CD14-positive monocyte (primary cell): ENCODE measurements at regions of chr16 and their contacts with region 1.

Region 1: DNA sequence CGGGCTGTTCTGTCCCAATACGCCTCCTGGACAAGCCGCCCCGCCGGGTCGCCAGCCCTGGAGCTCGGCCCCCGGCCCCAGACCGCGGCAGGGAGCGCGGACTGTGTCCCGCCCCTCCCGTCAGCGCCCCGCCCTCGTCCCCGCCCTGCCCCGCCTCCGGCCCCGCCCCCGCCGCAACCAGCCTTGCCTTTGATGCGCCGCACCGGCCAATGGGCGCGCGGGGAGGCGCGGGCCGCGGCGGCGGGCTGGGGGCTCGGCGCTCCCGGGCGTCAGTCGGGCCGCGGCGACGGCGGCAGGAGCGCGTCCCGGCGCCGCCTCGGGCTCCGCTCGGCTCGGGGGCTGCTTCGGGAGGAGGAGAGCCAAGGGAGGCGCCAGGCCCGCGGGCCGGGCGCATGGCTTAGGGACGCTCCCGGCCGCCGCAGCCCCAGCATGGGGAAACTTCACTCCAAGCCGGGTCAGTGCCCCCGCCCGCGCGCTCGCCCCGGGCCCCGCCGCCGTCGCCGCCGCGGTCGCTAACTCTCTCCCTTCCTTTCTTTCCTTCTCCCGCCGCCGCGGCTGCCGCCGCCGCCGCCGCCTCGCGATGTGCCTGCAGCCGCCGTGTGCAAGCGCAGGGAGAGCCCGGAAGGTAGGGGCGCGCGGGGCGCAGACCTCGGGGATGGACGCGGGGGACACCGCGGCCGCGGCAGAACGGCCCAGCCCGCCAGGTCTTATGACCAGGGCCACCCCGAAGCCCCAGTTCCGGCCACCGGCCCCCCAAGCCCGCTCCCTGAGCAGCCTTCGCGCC is at the start of gene NKD1:
- DNase-seq: peak; percentile 35 to 58 (median 55)
- H3K4me3 ChIP-seq: peak within 1 kb of the TSS; percentile 60 to 80 (median 60)
- H3K4me3 Mint-ChIP-seq: peak within 1 kb of the TSS; percentile 83 to 91
- H3K27ac ChIP-seq: no peak within 1 kb of the TSS
- H3K27ac Mint-ChIP-seq: peak within 1 kb of the TSS in 2 of 7 donors; percentile 53 to 70
- H3K4me1 ChIP-seq: peaks cover 13 to 14% of the 10 kb centered on the region in 2 donors
- H3K4me1 Mint-ChIP-seq: peaks cover 4% of the 10 kb centered on the region
- H3K27me3 ChIP-seq: peaks cover 30 to 64% of the 10 kb centered on the region in 2 donors
- H3K27me3 Mint-ChIP-seq: peaks cover 57 to 72% (median 57%) of the 10 kb centered on the region in 3 donors
- CTCF ChIP-seq: no peak
- polyA plus RNA-seq, gene NKD1: 0.01 TPM in 1 of 3 donors, not detected in the others

Region 2: GRCh38 chr16:49811644-49812334 is 736.5 kb before region 1 on chr16:
- intact Hi-C with region 1: no loop called
- DNase-seq: no peak
- H3K4me3 ChIP-seq: no peak overlapping the region
- H3K4me3 Mint-ChIP-seq: no peak overlapping the region
- H3K27ac ChIP-seq: no peak overlapping the region
- H3K27ac Mint-ChIP-seq: peak overlapping the region in 1 of 7 donors; percentile 42
- H3K4me1 ChIP-seq: no peaks in the 10 kb centered on the region
- H3K4me1 Mint-ChIP-seq: no peaks in the 10 kb centered on the region
- H3K27me3 ChIP-seq: no peaks in the 10 kb centered on the region
- H3K27me3 Mint-ChIP-seq: peaks cover 0 to 4% (median 2%) of the 10 kb centered on the region in 3 donors
- CTCF ChIP-seq: no peak

Region 3: GRCh38 chr16:50665128-50665878 is 117.0 kb after region 1 on chr16:
- intact Hi-C with region 1: loop called (anchors 5 kb)
- DNase-seq: peak; percentile 68 to 80 (median 72)
- H3K4me3 ChIP-seq: peak overlapping the region; percentile 65 to 83 (median 66)
- H3K4me3 Mint-ChIP-seq: peak overlapping the region; percentile 88 to 91
- H3K27ac ChIP-seq: peak overlapping the region; percentile 55 to 82
- H3K27ac Mint-ChIP-seq: peak overlapping the region; percentile 88 to 95 (median 91)
- H3K4me1 ChIP-seq: peaks cover 31 to 46% of the 10 kb centered on the region in 2 donors
- H3K4me1 Mint-ChIP-seq: peaks cover 41% of the 10 kb centered on the region
- H3K27me3 ChIP-seq: no peaks in the 10 kb centered on the region
- H3K27me3 Mint-ChIP-seq: peaks cover 0 to 2% (median 1%) of the 10 kb centered on the region in 3 donors
- CTCF ChIP-seq: peak; percentile 94

Region 4: GRCh38 chr16:50735629-50736122 is 187.4 kb after region 1 on chr16:
- intact Hi-C with region 1: loop called (anchors 5 to 10 kb)
- DNase-seq: peak; percentile 25 to 57 (median 30)
- H3K4me3 ChIP-seq: no peak overlapping the region
- H3K4me3 Mint-ChIP-seq: no peak overlapping the region
- H3K27ac ChIP-seq: peak overlapping the region in 1 of 2 donors; percentile 37
- H3K27ac Mint-ChIP-seq: peak overlapping the region; percentile 12 to 82 (median 68)
- H3K4me1 ChIP-seq: peaks cover 3 to 14% of the 10 kb centered on the region in 2 donors
- H3K4me1 Mint-ChIP-seq: peaks cover 31% of the 10 kb centered on the region
- H3K27me3 ChIP-seq: no peaks in the 10 kb centered on the region
- H3K27me3 Mint-ChIP-seq: peaks cover 0 to 2% (median 0%) of the 10 kb centered on the region in 3 donors
- CTCF ChIP-seq: no peak

Region 5: DNA sequence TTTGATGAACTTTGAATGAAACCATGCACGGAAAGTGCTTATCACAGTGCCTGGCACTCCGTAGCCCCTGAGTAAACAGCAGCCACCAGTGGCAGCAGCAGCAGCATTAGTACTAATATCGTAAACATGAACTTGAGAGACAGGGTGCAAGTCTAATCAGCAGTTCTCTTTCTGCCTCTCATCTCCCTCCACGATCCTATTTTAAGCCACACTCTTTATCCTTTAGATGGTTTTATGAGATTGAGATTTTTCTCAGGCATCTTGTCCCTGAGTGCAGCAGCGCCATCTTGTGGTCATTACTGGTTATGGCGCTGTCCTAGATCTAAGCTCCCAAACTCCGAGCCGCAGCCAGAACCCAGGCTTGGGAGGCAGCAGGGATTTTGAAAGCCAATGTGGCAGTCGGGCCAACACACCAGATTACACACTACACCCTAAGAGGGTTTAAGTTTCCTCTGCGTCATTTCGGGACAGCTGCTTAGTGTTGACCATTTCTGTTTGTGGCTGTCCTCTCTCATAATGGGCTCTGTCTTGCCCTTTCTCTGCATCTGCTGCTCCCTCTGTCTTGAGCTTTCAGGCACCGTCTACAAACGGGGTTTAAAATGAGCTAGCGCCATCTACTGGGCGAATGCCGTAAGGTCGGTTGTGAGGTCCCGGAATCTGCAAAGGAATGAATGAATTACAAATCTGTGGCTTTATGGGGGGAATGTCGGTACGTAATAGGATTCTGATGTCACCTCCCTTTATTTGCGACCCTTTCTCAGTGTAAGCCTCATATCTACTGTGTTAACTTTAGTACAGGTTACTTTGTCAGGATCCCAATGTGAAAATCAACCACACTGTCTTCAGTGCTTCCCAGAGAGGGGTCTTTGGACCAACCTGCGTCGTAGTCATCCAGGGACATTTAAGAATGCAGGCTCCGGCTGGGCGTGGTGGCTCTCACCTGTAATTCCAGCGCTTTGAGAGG is 258.1 kb after region 1 on chr16:
- intact Hi-C with region 1: loop called in 1 of 2 experiments (anchors 10 kb)
- DNase-seq: peak; percentile 79 to 84 (median 82)
- H3K4me3 ChIP-seq: peak overlapping the region in 2 of 3 experiments; percentile 35 to 72
- H3K4me3 Mint-ChIP-seq: peak overlapping the region; percentile 74 to 80
- H3K27ac ChIP-seq: peak overlapping the region in 1 of 2 donors; percentile 38
- H3K27ac Mint-ChIP-seq: peak overlapping the region in 6 of 7 donors; percentile 51 to 85 (median 82)
- H3K4me1 ChIP-seq: peaks cover 0 to 5% of the 10 kb centered on the region in 2 donors
- H3K4me1 Mint-ChIP-seq: peaks cover 12% of the 10 kb centered on the region
- H3K27me3 ChIP-seq: no peaks in the 10 kb centered on the region
- H3K27me3 Mint-ChIP-seq: peaks cover 0 to 5% (median 4%) of the 10 kb centered on the region in 3 donors
- CTCF ChIP-seq: peak; percentile 99